ENCODE measurements at regions of chr3 and their contacts with region 1.

Region 1: GRCh38 chr3:11643605-11644087 is at the start of gene VGLL4:
- DNase-seq: peak; percentile 50 to 93
- H3K4me3 ChIP-seq: peak within 1 kb of the TSS; percentile 79 to 82
- H3K27ac ChIP-seq: peak within 1 kb of the TSS; percentile 94 to 98
- H3K4me1 ChIP-seq: peaks cover 10 to 22% of the 10 kb centered on the region in 2 donors
- H3K27me3 ChIP-seq: no peaks in the 10 kb centered on the region
- CTCF ChIP-seq: peak in 1 of 3 experiments; percentile 11
- total RNA-seq, gene VGLL4: 146 TPM

Region 2: DNA sequence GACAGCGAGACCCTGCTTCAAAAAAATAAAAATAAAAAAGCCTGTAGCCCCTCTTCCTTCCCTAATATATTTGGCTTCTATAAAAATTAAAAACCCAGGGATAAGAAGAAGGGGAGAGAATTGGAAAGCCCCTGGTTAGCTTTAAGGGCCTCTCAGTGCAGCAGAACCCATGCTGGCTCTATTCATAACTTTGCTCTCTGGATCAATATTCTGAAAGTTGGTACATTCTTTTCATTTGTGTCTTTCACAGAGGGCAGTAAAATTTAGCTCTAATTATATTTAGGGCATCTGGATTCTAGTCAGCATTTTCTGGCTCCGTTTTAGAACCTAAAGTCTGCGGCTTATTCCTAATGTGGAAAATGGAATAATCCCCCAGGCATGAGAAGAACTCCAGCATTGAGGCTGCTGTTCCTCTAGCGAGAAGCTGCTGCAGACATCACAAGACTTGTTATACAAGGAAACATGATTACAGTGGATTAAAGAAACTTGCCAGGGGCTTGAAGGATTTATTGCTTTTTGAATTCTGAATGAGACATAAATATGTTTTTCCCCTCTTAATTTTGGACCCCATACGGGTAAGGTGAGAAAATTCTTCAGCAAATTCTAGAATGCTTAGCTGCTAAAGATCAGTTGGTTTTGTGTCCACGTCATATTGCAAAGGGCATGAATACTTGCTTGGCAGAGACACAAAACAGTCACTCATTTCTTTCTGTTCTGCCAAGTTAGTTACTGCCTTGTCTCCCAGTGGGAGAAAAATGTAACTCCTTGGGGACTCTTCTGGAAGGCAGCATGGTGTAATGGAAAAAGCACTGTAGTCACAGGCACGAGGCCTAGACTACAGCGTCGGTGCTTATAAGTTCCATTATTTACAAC is 177.7 kb before region 1 on chr3:
- intact Hi-C with region 1: loop called (anchors 10 kb)
- DNase-seq: peak in 1 of 2 donors; percentile 90
- H3K4me3 ChIP-seq: peak overlapping the region in 1 of 2 donors; percentile 32
- H3K27ac ChIP-seq: peak overlapping the region; percentile 91 to 92
- H3K4me1 ChIP-seq: peaks cover 4 to 33% of the 10 kb centered on the region in 2 donors
- H3K27me3 ChIP-seq: no peaks in the 10 kb centered on the region
- CTCF ChIP-seq: no peak

Region 3: GRCh38 chr3:11568503-11569155 is 75.0 kb before region 1 on chr3:
- intact Hi-C with region 1: loop called (anchors 2 kb)
- DNase-seq: peak; percentile 70 to 97
- H3K4me3 ChIP-seq: peak overlapping the region; percentile 29 to 54
- H3K27ac ChIP-seq: peak overlapping the region; percentile 97 to 99
- H3K4me1 ChIP-seq: peaks cover 16 to 55% of the 10 kb centered on the region in 2 donors
- H3K27me3 ChIP-seq: no peaks in the 10 kb centered on the region
- CTCF ChIP-seq: no peak

Region 4: DNA sequence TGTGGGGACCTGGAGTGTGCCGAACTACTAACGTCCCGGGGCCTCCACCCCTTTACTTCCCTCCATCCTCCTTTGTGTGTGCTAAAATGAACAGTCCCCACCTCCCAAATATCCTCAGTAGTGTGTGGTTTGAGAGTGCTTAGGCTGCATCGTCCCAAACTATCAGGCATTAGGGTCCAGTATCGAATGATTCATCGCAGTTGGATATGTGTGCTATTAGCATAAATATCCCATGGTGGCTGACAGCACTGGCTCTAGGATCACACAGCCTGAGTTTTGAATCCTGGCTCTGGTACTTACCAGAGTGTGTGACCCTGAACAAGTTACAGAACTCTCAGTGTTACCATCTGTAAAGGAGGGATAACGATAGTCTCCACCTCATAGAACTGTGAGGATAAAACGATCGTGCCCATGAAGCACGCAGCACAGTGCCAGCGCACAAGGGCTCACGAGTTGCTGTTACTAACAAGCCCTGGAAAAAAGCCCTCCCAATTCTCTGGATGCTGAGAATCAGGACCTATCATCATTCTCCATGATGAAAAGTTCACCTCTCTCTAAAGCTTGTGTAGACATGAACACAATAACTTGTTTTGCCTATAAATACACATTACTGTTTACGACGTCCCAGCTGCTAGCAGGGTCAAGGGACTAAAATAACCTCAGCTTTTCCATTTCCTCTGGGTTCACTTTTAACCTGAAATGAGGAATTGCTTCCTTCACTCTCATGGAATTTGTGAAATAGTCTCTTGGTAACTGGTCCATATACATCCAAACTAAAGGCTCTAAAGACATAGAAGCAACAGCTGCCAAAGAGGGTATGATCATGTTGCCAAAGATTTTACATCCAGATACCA is 51.0 kb before region 1 on chr3:
- intact Hi-C with region 1: no loop called
- DNase-seq: no peak
- H3K4me3 ChIP-seq: peak overlapping the region in 1 of 2 donors; percentile 14
- H3K27ac ChIP-seq: peak overlapping the region; percentile 70 to 83
- H3K4me1 ChIP-seq: peaks cover 35 to 57% of the 10 kb centered on the region in 2 donors
- H3K27me3 ChIP-seq: no peaks in the 10 kb centered on the region
- CTCF ChIP-seq: no peak